ENCODE measurements at regions of chr18 and their contacts with region 1.

Region 1: GRCh38 chr18:48663931-48664847 is 125.4 kb downstream of the CTIF start:
- DNase-seq: no peak
- ATAC-seq: peak; percentile 57
- H3K4me3 ChIP-seq: no peak overlapping the region
- H3K27ac ChIP-seq: no peak overlapping the region
- H3K4me1 ChIP-seq: no peaks in the 10 kb centered on the region
- H3K27me3 ChIP-seq: no peaks in the 10 kb centered on the region; a peak in 1 of 4 replicates
- CTCF ChIP-seq: peak; percentile 84 to 97 (median 88)
- EP300 ChIP-seq: no peak
- POLR2A ChIP-seq: no peak
- RAD21 ChIP-seq: peak; percentile 79

Region 2: DNA sequence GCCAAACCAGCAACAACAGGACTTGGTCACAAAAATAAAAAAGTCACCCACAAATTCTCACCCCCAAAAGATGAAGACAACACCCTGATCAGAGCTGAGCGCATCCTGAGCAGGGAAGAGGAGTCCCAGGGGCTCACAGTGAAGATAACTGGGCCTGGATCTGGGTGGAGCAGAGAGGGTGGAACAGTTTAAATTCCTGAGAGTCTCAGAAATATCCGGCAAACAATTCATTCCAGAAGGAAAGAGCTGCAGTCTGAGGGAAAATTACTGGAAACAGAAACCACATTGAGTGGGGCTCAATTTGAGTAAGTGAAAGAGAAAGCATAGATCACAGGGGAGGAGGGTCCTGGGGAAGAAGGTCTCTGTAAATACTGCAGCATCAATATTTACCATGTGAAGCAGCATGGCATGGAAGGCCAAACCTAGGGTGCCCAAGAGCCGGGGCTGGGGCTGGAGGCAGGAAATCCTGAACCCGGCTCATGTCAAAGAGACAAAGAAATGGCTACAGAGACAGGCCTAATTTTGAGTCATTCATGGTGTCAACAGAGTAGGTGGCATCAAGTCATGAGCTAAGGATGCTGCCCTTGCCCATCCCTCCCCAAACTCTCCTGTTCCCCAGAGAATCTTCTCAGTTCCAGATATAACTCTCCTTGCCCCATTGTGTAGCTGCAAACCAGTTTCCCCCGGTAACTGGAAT is 193.6 kb before region 1 on chr18:
- CTCF ChIA-PET with region 1: interaction called, 13 read pairs
- POLR2A ChIA-PET with region 1: no interaction called
- RAD21 ChIA-PET with region 1: interaction called, 3 read pairs
- SMC1A ChIA-PET with region 1: interaction called, 6 read pairs
- in situ Hi-C with region 1: loop called (anchors 5 kb)
- intact Hi-C with region 1: no loop called
- DNase-seq: no peak
- ATAC-seq: no peak
- H3K4me3 ChIP-seq: no peak overlapping the region
- H3K27ac ChIP-seq: no peak overlapping the region
- H3K4me1 ChIP-seq: no peaks in the 10 kb centered on the region
- H3K27me3 ChIP-seq: peaks cover 0 to 2% of the 10 kb centered on the region in 2 experiments; a peak in 2 of 4 replicates
- CTCF ChIP-seq: no peak
- EP300 ChIP-seq: no peak
- POLR2A ChIP-seq: no peak
- RAD21 ChIP-seq: no peak

Measured in GM12878 (cell line).